ENCODE measurements at regions of chr7 and their contacts with region 1.

Region 1: DNA sequence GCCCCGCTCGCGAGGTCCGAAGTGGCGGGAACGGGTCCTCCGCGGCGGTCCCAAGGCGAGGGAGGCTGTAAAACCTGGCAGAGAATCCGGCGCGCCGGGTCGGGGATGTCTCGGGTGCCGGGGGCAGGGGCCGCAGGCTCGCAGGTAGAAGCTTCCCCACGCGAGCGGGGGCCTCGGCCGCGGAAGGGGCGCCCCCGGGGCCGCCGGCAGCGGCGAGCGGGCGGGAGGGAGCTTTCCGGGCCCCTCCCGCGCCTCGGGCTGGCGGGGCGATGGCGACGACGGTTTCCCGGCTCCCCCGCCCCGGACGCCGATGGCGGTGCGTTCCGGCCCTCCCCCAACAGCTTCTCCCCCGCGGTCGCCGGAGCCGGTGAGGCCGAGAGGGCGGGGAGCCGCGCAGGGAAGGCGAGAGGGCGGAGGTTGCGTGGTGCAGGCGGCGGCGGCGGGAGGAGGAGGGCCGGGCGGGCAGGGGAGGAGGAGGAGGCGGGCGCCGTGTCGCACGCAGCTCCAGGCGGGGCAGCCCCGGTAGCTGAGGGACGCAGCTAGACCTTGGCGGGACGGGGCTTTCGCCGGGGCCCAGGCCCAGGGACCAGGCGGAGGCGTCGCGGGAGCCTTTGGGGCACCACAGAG is at the start of gene CUL1:
- DNase-seq: peak; percentile 84 to 89 (median 85)
- H3K4me3 ChIP-seq: peak within 1 kb of the TSS; percentile 67 to 89
- H3K4me3 Mint-ChIP-seq: peak within 1 kb of the TSS; percentile 88 to 95 (median 91)
- H3K27ac ChIP-seq: peak within 1 kb of the TSS; percentile 89
- H3K27ac Mint-ChIP-seq: peak within 1 kb of the TSS; percentile 91 to 96 (median 94)
- H3K4me1 ChIP-seq: peaks cover 45% of the 10 kb centered on the region
- H3K4me1 Mint-ChIP-seq: peaks cover 41 to 59% (median 47%) of the 10 kb centered on the region in 4 donors
- H3K27me3 ChIP-seq: no peaks in the 10 kb centered on the region
- H3K27me3 Mint-ChIP-seq: no peaks in the 10 kb centered on the region
- total RNA-seq, gene CUL1: 65.6 to 66.8 TPM

Region 2: GRCh38 chr7:148185041-148185440 is 513.5 kb before region 1 on chr7:
- CTCF ChIA-PET with region 1: no interaction called
- POLR2A ChIA-PET with region 1: no interaction called
- intact Hi-C with region 1: no loop called
- DNase-seq: no peak
- H3K4me3 ChIP-seq: no peak overlapping the region
- H3K4me3 Mint-ChIP-seq: no peak overlapping the region
- H3K27ac ChIP-seq: no peak overlapping the region
- H3K27ac Mint-ChIP-seq: no peak overlapping the region
- H3K4me1 ChIP-seq: no peaks in the 10 kb centered on the region
- H3K4me1 Mint-ChIP-seq: no peaks in the 10 kb centered on the region
- H3K27me3 ChIP-seq: no peaks in the 10 kb centered on the region
- H3K27me3 Mint-ChIP-seq: peaks cover 1 to 2% of the 10 kb centered on the region in 2 donors

Region 3: DNA sequence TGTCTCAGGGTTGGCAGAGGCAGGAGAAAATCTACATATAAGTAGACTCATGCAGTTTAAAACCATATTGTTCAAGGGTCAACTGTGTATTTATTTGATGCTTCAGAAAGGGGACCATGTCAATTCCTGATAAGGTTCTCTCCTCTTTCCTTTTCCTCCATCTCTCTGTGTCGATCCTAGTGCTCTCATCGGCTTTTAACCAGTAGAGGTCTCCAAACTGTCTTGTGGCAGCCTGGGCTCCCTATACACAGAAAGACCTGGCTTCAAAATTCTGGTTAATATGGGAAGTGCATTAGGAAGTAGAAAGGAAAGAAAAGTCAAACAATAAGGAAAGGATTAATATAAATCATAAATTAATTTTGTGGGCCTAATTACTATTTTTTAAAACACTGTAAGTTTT is 412.4 kb before region 1 on chr7:
- CTCF ChIA-PET with region 1: no interaction called
- POLR2A ChIA-PET with region 1: no interaction called
- intact Hi-C with region 1: no loop called
- DNase-seq: no peak
- H3K4me3 ChIP-seq: no peak overlapping the region
- H3K4me3 Mint-ChIP-seq: no peak overlapping the region
- H3K27ac ChIP-seq: no peak overlapping the region
- H3K27ac Mint-ChIP-seq: no peak overlapping the region
- H3K4me1 ChIP-seq: no peaks in the 10 kb centered on the region
- H3K4me1 Mint-ChIP-seq: no peaks in the 10 kb centered on the region
- H3K27me3 ChIP-seq: no peaks in the 10 kb centered on the region
- H3K27me3 Mint-ChIP-seq: peaks cover 3 to 8% of the 10 kb centered on the region in 2 donors

Region 4: DNA sequence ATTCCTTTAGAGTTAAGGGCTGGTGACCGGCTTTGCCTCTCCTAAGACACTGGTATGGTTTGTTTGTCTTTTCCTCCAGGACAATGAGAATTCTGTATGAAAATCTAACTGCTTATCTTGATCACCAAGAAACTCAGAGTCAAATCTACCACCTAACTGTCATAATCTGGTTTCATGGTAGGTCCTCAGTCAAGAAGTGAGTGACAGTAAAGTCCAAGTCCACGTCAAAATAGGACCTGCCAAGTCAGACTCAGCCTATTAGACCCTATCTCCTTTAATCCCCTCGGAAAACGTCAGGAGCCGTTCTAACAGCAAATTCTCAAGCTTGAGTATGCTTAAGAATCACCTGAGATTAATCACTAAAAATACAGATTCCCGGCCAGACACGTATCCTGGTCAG is 70.5 kb before region 1 on chr7:
- CTCF ChIA-PET with region 1: no interaction called
- POLR2A ChIA-PET with region 1: interaction called, 5 read pairs
- intact Hi-C with region 1: loop called (anchors 1 kb)
- DNase-seq: no peak
- H3K4me3 ChIP-seq: no peak overlapping the region
- H3K4me3 Mint-ChIP-seq: peak overlapping the region in 7 of 8 donors; percentile 27 to 71 (median 53)
- H3K27ac ChIP-seq: no peak overlapping the region
- H3K27ac Mint-ChIP-seq: peak overlapping the region in 5 of 7 donors; percentile 13 to 83 (median 40)
- H3K4me1 ChIP-seq: peaks cover 33% of the 10 kb centered on the region
- H3K4me1 Mint-ChIP-seq: peaks cover 33 to 66% (median 43%) of the 10 kb centered on the region in 4 donors
- H3K27me3 ChIP-seq: no peaks in the 10 kb centered on the region
- H3K27me3 Mint-ChIP-seq: peaks cover 4 to 7% of the 10 kb centered on the region in 2 donors

Region 5: GRCh38 chr7:148747275-148747674 is 48.8 kb after region 1 on chr7:
- CTCF ChIA-PET with region 1: no interaction called
- POLR2A ChIA-PET with region 1: interaction called, 10 read pairs
- intact Hi-C with region 1: no loop called
- DNase-seq: peak in 2 of 5 donors; percentile 7 to 8
- H3K4me3 ChIP-seq: no peak overlapping the region
- H3K4me3 Mint-ChIP-seq: no peak overlapping the region
- H3K27ac ChIP-seq: no peak overlapping the region
- H3K27ac Mint-ChIP-seq: peak overlapping the region in 3 of 7 donors; percentile 22 to 75 (median 70)
- H3K4me1 ChIP-seq: no peaks in the 10 kb centered on the region
- H3K4me1 Mint-ChIP-seq: peaks cover 13 to 33% (median 24%) of the 10 kb centered on the region in 4 donors
- H3K27me3 ChIP-seq: no peaks in the 10 kb centered on the region
- H3K27me3 Mint-ChIP-seq: no peaks in the 10 kb centered on the region

Region 6: DNA sequence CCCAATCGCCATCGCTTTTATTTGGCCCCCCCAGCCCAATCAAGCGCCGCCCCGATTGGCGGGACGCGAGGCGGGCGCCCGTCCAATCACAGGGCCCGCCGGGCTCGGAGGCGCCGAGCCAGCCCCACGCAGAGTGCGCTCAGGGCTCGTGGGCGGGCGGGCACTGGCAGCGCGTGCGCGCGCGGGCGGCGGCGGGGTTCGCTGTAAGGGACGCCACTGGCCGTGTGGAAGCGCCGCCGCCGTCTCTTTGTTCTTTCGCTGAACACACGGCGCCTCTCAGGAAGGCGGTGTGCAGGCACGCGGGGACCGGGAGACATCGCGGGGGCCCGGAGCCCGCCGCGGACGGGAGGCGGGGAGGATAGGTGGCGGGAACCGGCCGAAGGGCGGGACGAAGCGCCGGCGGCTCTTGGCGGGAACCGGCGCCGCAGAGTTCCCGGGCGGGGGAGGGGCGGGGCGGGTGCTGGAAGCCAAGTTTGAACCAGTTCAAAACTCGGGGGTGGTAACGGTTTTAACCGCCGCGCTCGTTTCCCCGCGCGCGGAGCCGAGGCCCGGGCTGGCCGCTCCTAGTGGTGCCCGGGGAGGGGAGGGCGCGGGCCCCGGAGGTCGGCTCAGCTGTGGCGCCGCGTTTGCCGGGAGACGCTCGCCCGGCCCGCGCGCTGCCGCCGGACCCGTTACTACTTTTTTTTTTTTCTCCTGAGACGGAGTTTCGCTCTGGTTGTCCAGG is 186.0 kb after region 1 on chr7:
- CTCF ChIA-PET with region 1: no interaction called
- POLR2A ChIA-PET with region 1: interaction called, 14 read pairs
- intact Hi-C with region 1: loop called (anchors 1 kb)
- DNase-seq: peak; percentile 91 to 96 (median 94)
- H3K4me3 ChIP-seq: peak overlapping the region in 1 of 2 donors; percentile 84
- H3K4me3 Mint-ChIP-seq: peak overlapping the region; percentile 90 to 97 (median 94)
- H3K27ac ChIP-seq: peak overlapping the region; percentile 79
- H3K27ac Mint-ChIP-seq: peak overlapping the region; percentile 89 to 96 (median 92)
- H3K4me1 ChIP-seq: peaks cover 31% of the 10 kb centered on the region
- H3K4me1 Mint-ChIP-seq: peaks cover 12 to 38% (median 24%) of the 10 kb centered on the region in 4 donors
- H3K27me3 ChIP-seq: no peaks in the 10 kb centered on the region
- H3K27me3 Mint-ChIP-seq: no peaks in the 10 kb centered on the region

Region 7: GRCh38 chr7:148987010-148987750 is 288.7 kb after region 1 on chr7:
- CTCF ChIA-PET with region 1: no interaction called
- POLR2A ChIA-PET with region 1: interaction called, 6 read pairs
- intact Hi-C with region 1: loop called (anchors 5 kb)
- DNase-seq: peak; percentile 89 to 91 (median 90)
- H3K4me3 ChIP-seq: peak overlapping the region; percentile 95 to 98
- H3K4me3 Mint-ChIP-seq: peak overlapping the region; percentile 93 to 99 (median 98)
- H3K27ac ChIP-seq: peak overlapping the region; percentile 83
- H3K27ac Mint-ChIP-seq: peak overlapping the region; percentile 96 to 100 (median 98)
- H3K4me1 ChIP-seq: peaks cover 46% of the 10 kb centered on the region
- H3K4me1 Mint-ChIP-seq: peaks cover 27 to 59% (median 45%) of the 10 kb centered on the region in 4 donors
- H3K27me3 ChIP-seq: no peaks in the 10 kb centered on the region
- H3K27me3 Mint-ChIP-seq: peaks cover 2 to 5% of the 10 kb centered on the region in 2 donors